K562 (cell line): ENCODE measurements at regions of chr11 and their contacts with region 1.

Region 1: GRCh38 chr11:14974515-14975251 is 2.5 kb upstream of the CALCA start:
- DNase-seq: peak; percentile 41 to 66 (median 48)
- ATAC-seq: peak; percentile 91
- H3K4me3 ChIP-seq: no peak overlapping the region
- H3K27ac ChIP-seq: no peak overlapping the region
- H3K4me1 ChIP-seq: peaks cover 3 to 18% of the 10 kb centered on the region in 2 experiments; a peak in 3 of 5 replicates
- H3K27me3 ChIP-seq: peaks cover 25 to 39% of the 10 kb centered on the region in 2 experiments; a peak in 4 of 5 replicates
- CTCF ChIP-seq: peak; percentile 66 to 84 (median 79)
- EP300 ChIP-seq: no peak
- POLR2A ChIP-seq: no peak
- RAD21 ChIP-seq: peak; percentile 19 to 56; a peak in 2 of 4 replicates

Region 2: GRCh38 chr11:14949437-14950147 is 25.1 kb before region 1 on chr11:
- CTCF ChIA-PET with region 1: no interaction called
- POLR2A ChIA-PET with region 1: no interaction called
- in situ Hi-C with region 1: no loop called
- intact Hi-C with region 1: no loop called
- DNase-seq: no peak
- ATAC-seq: no peak
- H3K4me3 ChIP-seq: no peak overlapping the region
- H3K27ac ChIP-seq: no peak overlapping the region
- H3K4me1 ChIP-seq: peaks cover 0 to 6% of the 10 kb centered on the region in 2 experiments; a peak in 2 of 5 replicates
- H3K27me3 ChIP-seq: no peaks in the 10 kb centered on the region
- CTCF ChIP-seq: no peak
- EP300 ChIP-seq: no peak
- POLR2A ChIP-seq: no peak
- RAD21 ChIP-seq: no peak

Region 3: GRCh38 chr11:15006139-15006759 is 31.6 kb after region 1 on chr11:
- CTCF ChIA-PET with region 1: no interaction called
- POLR2A ChIA-PET with region 1: no interaction called
- in situ Hi-C with region 1: no loop called
- intact Hi-C with region 1: loop called (anchors 2 kb)
- DNase-seq: peak; percentile 19 to 59 (median 29)
- ATAC-seq: peak; percentile 95
- H3K4me3 ChIP-seq: no peak overlapping the region
- H3K27ac ChIP-seq: no peak overlapping the region
- H3K4me1 ChIP-seq: no peaks in the 10 kb centered on the region
- H3K27me3 ChIP-seq: no peaks in the 10 kb centered on the region
- CTCF ChIP-seq: peak; percentile 62 to 77 (median 66)
- EP300 ChIP-seq: no peak
- POLR2A ChIP-seq: no peak
- RAD21 ChIP-seq: peak; percentile 33 to 76; a peak in 3 of 4 replicates

Region 4: GRCh38 chr11:15074206-15075161 is 99.8 kb after region 1 on chr11:
- CTCF ChIA-PET with region 1: no interaction called
- POLR2A ChIA-PET with region 1: no interaction called
- in situ Hi-C with region 1: no loop called
- intact Hi-C with region 1: loop called (anchors 2 kb)
- DNase-seq: peak; percentile 51 to 77 (median 52)
- ATAC-seq: peak; percentile 99
- H3K4me3 ChIP-seq: no peak overlapping the region
- H3K27ac ChIP-seq: no peak overlapping the region
- H3K4me1 ChIP-seq: peaks cover 0 to 11% of the 10 kb centered on the region in 2 experiments; a peak in 2 of 5 replicates
- H3K27me3 ChIP-seq: peaks cover 3 to 31% of the 10 kb centered on the region in 2 experiments; a peak in 4 of 5 replicates
- CTCF ChIP-seq: peak; percentile 76 to 79 (median 78)
- EP300 ChIP-seq: no peak
- POLR2A ChIP-seq: no peak
- RAD21 ChIP-seq: peak; percentile 75 to 81

Region 5: DNA sequence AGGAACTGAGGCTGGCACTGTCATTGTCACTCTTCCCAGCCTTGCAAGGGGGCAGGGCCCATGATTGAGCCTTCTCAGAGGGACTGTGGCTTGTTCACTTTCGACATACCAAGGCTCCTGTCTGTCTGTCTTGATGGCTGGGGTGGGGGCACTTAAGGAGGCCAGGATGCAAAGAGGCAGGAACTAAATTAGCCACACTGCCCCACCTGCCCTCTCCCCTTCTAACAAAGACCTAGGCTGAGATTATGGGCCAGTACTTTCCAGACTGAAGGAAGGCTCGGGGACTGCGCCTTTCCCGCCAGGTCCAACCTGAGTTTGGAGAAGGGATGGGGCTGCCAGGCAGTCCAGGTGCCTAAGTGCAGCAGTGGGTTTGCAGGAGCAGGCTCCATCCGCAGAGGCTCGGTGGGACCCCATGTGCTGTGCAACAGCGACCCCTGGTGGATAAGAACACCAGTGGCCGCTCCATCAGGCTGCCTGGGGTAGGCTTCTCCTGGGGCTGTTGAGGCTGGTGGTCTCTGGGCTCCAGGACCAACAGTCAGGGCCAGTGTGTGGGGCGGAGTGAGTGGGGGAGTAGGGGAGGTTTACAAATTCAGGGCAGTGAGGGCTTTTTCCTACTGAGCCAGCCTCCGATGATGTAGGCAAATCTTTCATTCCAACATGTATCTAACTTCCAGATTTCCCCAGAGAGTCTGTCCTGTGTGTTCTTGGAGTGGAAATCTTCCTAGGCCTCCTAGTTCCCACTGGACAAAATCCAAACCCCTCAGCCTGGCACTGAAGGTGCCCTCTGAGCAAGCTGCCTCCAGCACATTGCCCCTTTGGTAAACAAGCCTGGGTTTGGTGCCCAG is 233.9 kb after region 1 on chr11:
- CTCF ChIA-PET with region 1: no interaction called
- POLR2A ChIA-PET with region 1: no interaction called
- in situ Hi-C with region 1: no loop called
- intact Hi-C with region 1: loop called (anchors 1 kb)
- DNase-seq: peak; percentile 74 to 86 (median 84)
- ATAC-seq: peak; percentile 99
- H3K4me3 ChIP-seq: no peak overlapping the region
- H3K27ac ChIP-seq: no peak overlapping the region
- H3K4me1 ChIP-seq: no peaks in the 10 kb centered on the region
- H3K27me3 ChIP-seq: no peaks in the 10 kb centered on the region; a peak in 1 of 5 replicates
- CTCF ChIP-seq: peak; percentile 83 to 88 (median 86)
- EP300 ChIP-seq: no peak
- POLR2A ChIP-seq: no peak
- RAD21 ChIP-seq: peak; percentile 83 to 87

Region 6: DNA sequence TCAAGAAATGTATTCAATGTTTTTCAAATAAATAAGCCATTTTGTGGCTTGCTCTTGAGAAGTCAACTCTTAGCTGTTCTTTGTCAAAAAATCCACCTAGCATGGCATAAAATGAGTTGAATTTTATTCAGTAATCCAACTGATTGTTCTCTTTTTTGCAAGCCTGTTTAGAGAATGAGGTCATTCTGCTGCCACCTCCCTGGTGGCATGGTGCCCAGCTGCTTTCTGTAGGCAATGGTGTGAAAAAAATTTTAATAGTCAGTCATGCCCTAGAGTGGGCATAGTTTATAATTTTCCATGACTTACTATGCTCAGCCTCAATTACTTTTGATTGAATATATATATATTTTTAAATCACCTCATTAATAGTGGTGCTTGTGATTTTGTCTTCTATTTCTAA is 317.2 kb after region 1 on chr11:
- CTCF ChIA-PET with region 1: no interaction called
- POLR2A ChIA-PET with region 1: no interaction called
- in situ Hi-C with region 1: no loop called
- intact Hi-C with region 1: no loop called
- DNase-seq: no peak
- ATAC-seq: no peak
- H3K4me3 ChIP-seq: no peak overlapping the region
- H3K27ac ChIP-seq: no peak overlapping the region
- H3K4me1 ChIP-seq: no peaks in the 10 kb centered on the region
- H3K27me3 ChIP-seq: no peaks in the 10 kb centered on the region; a peak in 1 of 5 replicates
- CTCF ChIP-seq: no peak
- EP300 ChIP-seq: no peak
- POLR2A ChIP-seq: no peak
- RAD21 ChIP-seq: no peak